ENCODE measurements at regions of chr5 and their contacts with region 1.

Region 1: GRCh38 chr5:41305056-41305455 is 91.7 kb upstream of the C6 start:
- DNase-seq: no peak
- ATAC-seq: no peak
- H3K4me3 ChIP-seq: no peak overlapping the region
- H3K27ac ChIP-seq: no peak overlapping the region
- H3K4me1 ChIP-seq: no peaks in the 10 kb centered on the region
- H3K27me3 ChIP-seq: no peaks in the 10 kb centered on the region
- CTCF ChIP-seq: no peak

Region 2: GRCh38 chr5:41012318-41012717 is 292.7 kb before region 1 on chr5:
- CTCF ChIA-PET with region 1: no interaction called
- POLR2A ChIA-PET with region 1: interaction called, 10 read pairs
- in situ Hi-C with region 1: no loop called
- intact Hi-C with region 1: no loop called
- DNase-seq: no peak
- ATAC-seq: no peak
- H3K4me3 ChIP-seq: no peak overlapping the region
- H3K27ac ChIP-seq: no peak overlapping the region
- H3K4me1 ChIP-seq: no peaks in the 10 kb centered on the region
- H3K27me3 ChIP-seq: no peaks in the 10 kb centered on the region
- CTCF ChIP-seq: no peak

Region 3: GRCh38 chr5:41193456-41194205 is 111.4 kb before region 1 on chr5:
- CTCF ChIA-PET with region 1: no interaction called
- POLR2A ChIA-PET with region 1: no interaction called
- in situ Hi-C with region 1: no loop called
- intact Hi-C with region 1: no loop called
- DNase-seq: no peak
- ATAC-seq: no peak
- H3K4me3 ChIP-seq: no peak overlapping the region
- H3K27ac ChIP-seq: no peak overlapping the region
- H3K4me1 ChIP-seq: no peaks in the 10 kb centered on the region
- H3K27me3 ChIP-seq: no peaks in the 10 kb centered on the region
- CTCF ChIP-seq: no peak

Measured in Panc1 (cell line).